Astrocyte of the cerebellum (primary cell): ENCODE measurements at regions of chr12 and their contacts with region 1.

Region 1: DNA sequence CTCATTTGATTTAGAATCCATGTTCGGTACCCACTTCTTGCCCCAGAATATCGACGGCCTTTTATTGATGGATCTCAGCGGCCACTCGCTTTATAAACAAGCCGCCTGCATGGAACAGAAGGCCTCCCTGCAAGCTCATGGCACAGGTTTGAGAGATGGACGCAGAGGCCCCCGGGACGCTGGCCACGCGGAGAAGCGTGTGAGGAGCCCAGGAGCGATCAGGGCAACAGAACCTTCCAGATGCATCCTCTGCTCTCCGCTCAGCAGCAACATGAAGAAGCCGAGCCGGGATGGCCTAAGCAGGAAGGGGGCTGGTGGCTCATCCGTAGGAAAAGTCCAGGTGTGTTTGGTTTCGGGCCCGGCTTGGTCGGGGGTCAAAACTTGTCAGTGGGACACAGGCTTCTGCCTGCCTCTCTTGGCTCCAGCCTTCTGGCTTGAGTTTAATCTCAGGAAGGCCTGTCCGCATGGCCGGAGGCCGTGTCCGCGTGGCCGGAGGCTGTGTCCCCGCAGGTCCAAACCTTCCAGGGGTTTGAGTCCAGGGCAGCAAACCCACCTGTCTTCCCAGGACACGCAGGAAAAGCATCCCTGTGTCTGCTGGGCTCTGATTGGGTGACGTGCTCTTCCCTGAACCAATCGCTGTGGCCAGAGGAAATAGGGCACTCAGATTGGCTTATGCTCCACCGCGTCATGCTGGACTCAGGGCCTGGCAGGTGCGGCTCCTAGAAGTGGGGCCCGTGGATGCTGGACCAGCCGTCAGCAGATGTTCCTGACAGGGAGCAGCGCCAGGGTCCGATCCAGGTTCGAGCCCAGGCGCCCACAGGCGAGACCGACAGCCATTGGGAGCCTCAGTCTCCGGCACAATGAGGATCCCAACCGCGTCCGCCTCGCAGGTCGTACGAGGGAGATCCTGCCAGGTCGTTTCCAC is 65.0 kb downstream of the GALNT9 start:
- DNase-seq: no peak
- H3K4me3 ChIP-seq: no peak overlapping the region
- CTCF ChIP-seq: no peak

Region 2: DNA sequence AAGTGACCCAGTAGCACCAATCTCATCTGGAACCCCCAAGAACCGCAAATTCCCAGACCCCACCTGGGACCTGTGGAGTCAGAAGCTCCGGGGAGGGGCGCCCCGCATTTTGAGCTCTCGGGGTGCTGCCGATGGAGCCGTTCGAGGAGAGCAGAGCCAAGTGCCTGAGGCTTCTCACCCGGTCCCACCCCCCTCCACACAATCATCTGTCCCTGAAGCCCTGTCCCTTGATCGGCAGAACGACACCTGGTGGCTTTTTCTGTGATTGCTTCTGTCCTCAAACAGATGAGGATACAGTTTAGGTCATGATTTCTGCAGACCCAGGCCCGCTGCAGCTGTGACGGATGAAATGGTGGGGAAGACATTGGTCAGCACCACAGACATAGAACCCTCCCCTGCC is 45.4 kb before region 1 on chr12:
- in situ Hi-C with region 1: no loop called
- DNase-seq: no peak
- H3K4me3 ChIP-seq: no peak overlapping the region
- CTCF ChIP-seq: peak; percentile 16

Region 3: DNA sequence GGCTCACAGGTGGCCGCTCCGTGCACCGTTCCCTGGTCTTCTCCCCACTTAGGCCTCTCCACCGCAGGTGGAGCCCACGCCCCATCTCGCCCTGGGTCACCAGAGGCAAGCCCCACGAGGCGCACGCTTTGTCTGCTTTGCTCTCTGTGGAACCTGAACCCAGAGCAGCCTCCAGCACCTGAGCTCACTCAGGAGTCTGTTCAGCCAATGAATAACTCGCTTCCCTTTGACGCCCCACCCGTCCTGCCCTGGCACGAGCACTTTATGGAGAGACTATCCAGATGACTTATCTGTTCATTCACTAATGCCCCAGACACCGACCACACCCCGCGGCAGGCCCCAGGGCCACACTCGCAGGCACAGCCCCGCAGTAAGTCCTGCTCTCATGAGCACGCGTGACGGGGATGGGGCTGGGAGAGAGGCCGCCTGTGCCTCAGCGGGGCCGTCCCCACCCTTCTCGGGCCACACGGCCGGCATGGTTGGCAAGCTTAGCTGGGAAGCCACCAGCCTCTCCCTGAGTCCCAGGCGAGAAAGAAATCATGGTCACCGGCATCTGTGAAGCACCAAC is 35.1 kb before region 1 on chr12:
- in situ Hi-C with region 1: no loop called
- DNase-seq: no peak
- H3K4me3 ChIP-seq: no peak overlapping the region
- CTCF ChIP-seq: no peak

Region 4: GRCh38 chr12:132323171-132324010 is 59.0 kb after region 1 on chr12:
- in situ Hi-C with region 1: loop called (anchors 5 kb)
- DNase-seq: no peak
- H3K4me3 ChIP-seq: no peak overlapping the region
- CTCF ChIP-seq: no peak